Caco-2 (cell line): ENCODE measurements at regions of chr15 and their contacts with region 1.

Region 1: GRCh38 chr15:70636540-70637165 is 126.7 kb downstream of the UACA start:
- DNase-seq: peak; percentile 51 to 56
- H3K4me3 ChIP-seq: no peak overlapping the region
- H3K4me3 Mint-ChIP-seq: no peak overlapping the region
- H3K27ac Mint-ChIP-seq: peak overlapping the region; percentile 34
- H3K4me1 ChIP-seq: peaks cover 37% of the 10 kb centered on the region
- H3K4me1 Mint-ChIP-seq: peaks cover 43% of the 10 kb centered on the region
- H3K27me3 ChIP-seq: no peaks in the 10 kb centered on the region
- H3K27me3 Mint-ChIP-seq: no peaks in the 10 kb centered on the region
- CTCF ChIP-seq: peak; percentile 57 to 71

Region 2: DNA sequence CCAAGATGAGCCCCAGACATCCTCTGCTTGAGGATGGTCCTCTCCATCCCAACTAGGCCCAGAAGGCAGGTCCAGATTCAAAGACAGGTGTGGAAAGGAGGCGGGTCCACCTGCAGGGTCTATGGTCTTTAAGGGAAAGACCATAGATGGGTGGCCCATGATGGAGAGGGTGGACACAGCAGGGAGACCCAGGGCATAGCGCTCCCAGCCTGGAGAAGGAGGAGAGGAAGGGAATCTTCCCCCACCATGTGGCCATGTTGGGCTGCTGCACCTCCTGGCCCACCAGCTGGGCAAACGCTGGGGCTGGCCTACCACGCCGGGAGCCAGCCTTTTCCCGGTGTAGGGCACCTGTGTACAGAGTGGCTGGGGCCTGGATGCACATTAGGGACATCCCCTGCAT is 273.8 kb before region 1 on chr15:
- CTCF ChIA-PET with region 1: interaction called, 3 read pairs
- POLR2A ChIA-PET with region 1: no interaction called
- intact Hi-C with region 1: loop called (anchors 1 kb)
- DNase-seq: peak; percentile 54 to 63
- H3K4me3 ChIP-seq: no peak overlapping the region
- H3K4me3 Mint-ChIP-seq: no peak overlapping the region
- H3K27ac Mint-ChIP-seq: no peak overlapping the region
- H3K4me1 ChIP-seq: no peaks in the 10 kb centered on the region; the same call in 1 of the 2 replicates
- H3K4me1 Mint-ChIP-seq: peaks cover 5% of the 10 kb centered on the region
- H3K27me3 ChIP-seq: no peaks in the 10 kb centered on the region
- H3K27me3 Mint-ChIP-seq: no peaks in the 10 kb centered on the region
- CTCF ChIP-seq: peak; percentile 71 to 75

Region 3: DNA sequence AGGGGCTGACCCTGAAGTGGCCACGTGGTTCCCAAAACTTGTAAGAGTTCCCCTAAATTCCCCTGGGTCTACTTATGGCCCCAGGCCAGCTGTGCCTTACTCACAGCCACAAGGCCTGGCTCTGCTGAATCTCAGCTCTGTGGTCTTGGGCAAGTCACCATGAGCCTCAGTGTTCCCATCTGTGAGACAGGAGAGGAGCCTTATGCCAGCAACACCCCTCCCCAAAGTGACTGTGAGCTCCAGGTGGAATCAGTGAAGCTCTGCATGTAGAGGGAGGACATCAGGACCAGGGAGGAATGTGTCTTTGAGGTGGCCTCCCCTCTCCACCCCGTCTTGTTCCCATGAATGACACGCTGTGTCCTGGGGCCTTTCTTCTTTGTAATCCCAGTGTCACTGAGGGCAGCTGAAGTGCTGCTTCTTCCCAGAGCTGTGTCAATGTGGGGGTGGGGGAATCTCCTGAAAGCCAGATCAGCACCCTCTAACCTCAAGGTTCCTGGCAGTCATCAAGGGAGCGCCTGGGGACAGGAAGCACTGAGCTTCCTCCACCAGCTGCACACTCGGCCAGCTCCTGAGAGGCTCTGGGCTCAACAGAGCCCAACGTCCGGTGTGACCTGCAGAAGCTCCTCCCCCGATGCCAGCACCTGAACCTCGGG is 132.2 kb before region 1 on chr15:
- CTCF ChIA-PET with region 1: no interaction called
- POLR2A ChIA-PET with region 1: no interaction called
- intact Hi-C with region 1: no loop called
- DNase-seq: no peak
- H3K4me3 ChIP-seq: no peak overlapping the region
- H3K4me3 Mint-ChIP-seq: no peak overlapping the region
- H3K27ac Mint-ChIP-seq: no peak overlapping the region
- H3K4me1 ChIP-seq: peaks cover 51% of the 10 kb centered on the region
- H3K4me1 Mint-ChIP-seq: peaks cover 30% of the 10 kb centered on the region
- H3K27me3 ChIP-seq: no peaks in the 10 kb centered on the region
- H3K27me3 Mint-ChIP-seq: no peaks in the 10 kb centered on the region
- CTCF ChIP-seq: no peak

Region 4: GRCh38 chr15:70516408-70517158 is 120.1 kb before region 1 on chr15:
- CTCF ChIA-PET with region 1: interaction called, 3 read pairs
- POLR2A ChIA-PET with region 1: no interaction called
- intact Hi-C with region 1: loop called (anchors 2 kb)
- DNase-seq: no peak
- H3K4me3 ChIP-seq: no peak overlapping the region
- H3K4me3 Mint-ChIP-seq: no peak overlapping the region
- H3K27ac Mint-ChIP-seq: no peak overlapping the region
- H3K4me1 ChIP-seq: peaks cover 11% of the 10 kb centered on the region; the same call in 1 of the 2 replicates
- H3K4me1 Mint-ChIP-seq: peaks cover 10% of the 10 kb centered on the region
- H3K27me3 ChIP-seq: no peaks in the 10 kb centered on the region
- H3K27me3 Mint-ChIP-seq: no peaks in the 10 kb centered on the region
- CTCF ChIP-seq: peak in 1 of 2 experiments; percentile 31

Region 5: GRCh38 chr15:70584838-70585706 is 51.6 kb before region 1 on chr15:
- CTCF ChIA-PET with region 1: interaction called, 14 read pairs
- POLR2A ChIA-PET with region 1: interaction called, 4 read pairs
- intact Hi-C with region 1: loop called (anchors 2 kb)
- DNase-seq: peak; percentile 84 to 93
- H3K4me3 ChIP-seq: peak overlapping the region; percentile 38
- H3K4me3 Mint-ChIP-seq: peak overlapping the region; percentile 74
- H3K27ac Mint-ChIP-seq: peak overlapping the region; percentile 92
- H3K4me1 ChIP-seq: peaks cover 17% of the 10 kb centered on the region
- H3K4me1 Mint-ChIP-seq: peaks cover 12% of the 10 kb centered on the region
- H3K27me3 ChIP-seq: no peaks in the 10 kb centered on the region
- H3K27me3 Mint-ChIP-seq: no peaks in the 10 kb centered on the region
- CTCF ChIP-seq: peak; percentile 53 to 76

Region 6: GRCh38 chr15:70617076-70617910 is 19.4 kb before region 1 on chr15:
- CTCF ChIA-PET with region 1: no interaction called
- POLR2A ChIA-PET with region 1: no interaction called
- intact Hi-C with region 1: loop called (anchors 1 kb)
- DNase-seq: peak; percentile 75 to 81
- H3K4me3 ChIP-seq: no peak overlapping the region
- H3K4me3 Mint-ChIP-seq: peak overlapping the region; percentile 65
- H3K27ac Mint-ChIP-seq: peak overlapping the region; percentile 91
- H3K4me1 ChIP-seq: peaks cover 27% of the 10 kb centered on the region
- H3K4me1 Mint-ChIP-seq: peaks cover 25% of the 10 kb centered on the region
- H3K27me3 ChIP-seq: no peaks in the 10 kb centered on the region
- H3K27me3 Mint-ChIP-seq: no peaks in the 10 kb centered on the region
- CTCF ChIP-seq: no peak

Region 7: DNA sequence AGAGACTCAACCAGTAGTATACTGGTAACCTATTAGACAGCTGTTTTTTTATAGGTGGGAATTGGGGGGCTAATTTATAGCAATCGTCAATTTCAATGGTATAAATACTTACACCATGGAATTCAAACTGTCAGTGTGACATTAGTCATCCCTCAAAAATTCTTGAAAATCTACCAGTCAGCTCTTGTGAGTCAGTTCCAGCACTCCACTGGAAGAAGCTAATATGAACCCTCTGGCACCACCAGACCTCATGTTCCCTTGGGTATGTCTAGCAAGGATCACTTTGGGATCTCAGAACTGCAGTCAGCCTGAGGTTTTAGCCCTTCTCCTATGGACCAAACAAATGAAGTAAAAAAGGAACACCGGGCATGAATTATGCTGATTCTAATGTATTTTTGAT is 138.5 kb after region 1 on chr15:
- CTCF ChIA-PET with region 1: no interaction called
- POLR2A ChIA-PET with region 1: no interaction called
- intact Hi-C with region 1: no loop called
- DNase-seq: no peak
- H3K4me3 ChIP-seq: no peak overlapping the region
- H3K4me3 Mint-ChIP-seq: no peak overlapping the region
- H3K27ac Mint-ChIP-seq: no peak overlapping the region
- H3K4me1 ChIP-seq: peaks cover 24% of the 10 kb centered on the region
- H3K4me1 Mint-ChIP-seq: peaks cover 47% of the 10 kb centered on the region
- H3K27me3 ChIP-seq: no peaks in the 10 kb centered on the region
- H3K27me3 Mint-ChIP-seq: no peaks in the 10 kb centered on the region
- CTCF ChIP-seq: no peak